ENCODE measurements at regions of chr12 and their contacts with region 1.

Region 1: DNA sequence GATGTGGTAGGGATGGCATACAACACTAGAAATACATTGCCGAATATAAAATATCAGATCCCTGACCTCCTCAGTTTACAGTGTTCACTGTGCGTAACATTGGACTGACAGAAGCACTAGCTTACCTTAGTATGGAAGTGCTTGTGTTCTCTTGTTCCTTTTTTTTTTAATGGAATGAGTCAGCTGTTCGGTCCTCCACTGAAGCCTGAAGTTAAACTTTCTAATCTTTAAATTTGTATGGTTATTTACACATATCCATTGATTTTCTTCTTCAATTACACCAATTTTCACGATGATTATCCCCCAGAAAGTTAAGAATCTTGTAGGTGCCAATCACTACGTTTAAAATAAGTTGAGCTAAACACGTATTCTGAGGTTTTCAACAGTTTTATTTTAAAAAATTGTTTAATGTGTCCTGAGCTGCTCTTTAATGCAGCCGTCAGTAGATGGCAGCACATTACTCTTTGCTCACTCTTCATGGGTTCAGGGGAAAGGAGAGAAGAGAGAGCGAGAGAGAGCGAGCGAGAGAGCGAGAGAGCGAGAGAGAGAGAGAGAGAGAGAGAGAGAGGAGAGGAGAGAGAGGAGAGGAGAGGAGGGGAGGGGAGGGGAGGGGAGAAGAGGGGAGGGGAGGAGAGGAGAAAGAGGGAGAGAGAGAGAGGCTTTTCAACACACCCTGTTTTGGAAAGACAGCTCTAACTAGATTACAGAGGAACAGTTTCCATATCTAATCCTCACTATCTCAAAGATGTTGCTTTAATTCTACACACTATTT is 134.7 kb upstream of the SCAF11 start:
- DNase-seq: no peak
- ATAC-seq: peak; percentile 93
- H3K4me3 Mint-ChIP-seq: peak overlapping the region; percentile 67
- H3K27ac Mint-ChIP-seq: peak overlapping the region; percentile 72
- H3K4me1 Mint-ChIP-seq: peaks cover 5% of the 10 kb centered on the region
- H3K27me3 Mint-ChIP-seq: peaks cover 5% of the 10 kb centered on the region
- CTCF ChIP-seq: peak; percentile 75

Region 2: DNA sequence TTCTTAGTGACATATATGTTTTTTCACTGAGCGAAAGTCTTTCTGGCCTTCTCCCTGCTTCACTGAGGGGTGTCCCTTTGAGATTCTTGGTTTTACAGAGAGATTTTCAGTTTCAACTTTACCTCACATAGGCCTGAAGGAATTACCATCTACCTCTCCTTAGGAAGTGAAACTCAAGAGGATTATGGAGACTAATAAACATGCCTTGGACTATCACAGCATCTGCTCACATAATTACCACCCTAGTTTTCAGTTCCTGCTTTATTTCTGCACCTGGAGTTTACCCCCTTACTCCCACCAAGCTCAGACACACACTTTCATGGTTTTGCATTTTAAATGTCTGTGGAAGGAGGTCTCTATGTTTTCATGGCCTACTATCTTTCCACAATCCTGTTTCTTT is 16.3 kb before region 1 on chr12:
- CTCF ChIA-PET with region 1: interaction called, 22 read pairs
- POLR2A ChIA-PET with region 1: interaction called, 5 read pairs
- intact Hi-C with region 1: no loop called
- DNase-seq: no peak
- ATAC-seq: peak; percentile 87
- H3K4me3 Mint-ChIP-seq: peak overlapping the region; percentile 60
- H3K27ac Mint-ChIP-seq: peak overlapping the region; percentile 85
- H3K4me1 Mint-ChIP-seq: peaks cover 49% of the 10 kb centered on the region
- H3K27me3 Mint-ChIP-seq: no peaks in the 10 kb centered on the region
- CTCF ChIP-seq: no peak

Region 3: DNA sequence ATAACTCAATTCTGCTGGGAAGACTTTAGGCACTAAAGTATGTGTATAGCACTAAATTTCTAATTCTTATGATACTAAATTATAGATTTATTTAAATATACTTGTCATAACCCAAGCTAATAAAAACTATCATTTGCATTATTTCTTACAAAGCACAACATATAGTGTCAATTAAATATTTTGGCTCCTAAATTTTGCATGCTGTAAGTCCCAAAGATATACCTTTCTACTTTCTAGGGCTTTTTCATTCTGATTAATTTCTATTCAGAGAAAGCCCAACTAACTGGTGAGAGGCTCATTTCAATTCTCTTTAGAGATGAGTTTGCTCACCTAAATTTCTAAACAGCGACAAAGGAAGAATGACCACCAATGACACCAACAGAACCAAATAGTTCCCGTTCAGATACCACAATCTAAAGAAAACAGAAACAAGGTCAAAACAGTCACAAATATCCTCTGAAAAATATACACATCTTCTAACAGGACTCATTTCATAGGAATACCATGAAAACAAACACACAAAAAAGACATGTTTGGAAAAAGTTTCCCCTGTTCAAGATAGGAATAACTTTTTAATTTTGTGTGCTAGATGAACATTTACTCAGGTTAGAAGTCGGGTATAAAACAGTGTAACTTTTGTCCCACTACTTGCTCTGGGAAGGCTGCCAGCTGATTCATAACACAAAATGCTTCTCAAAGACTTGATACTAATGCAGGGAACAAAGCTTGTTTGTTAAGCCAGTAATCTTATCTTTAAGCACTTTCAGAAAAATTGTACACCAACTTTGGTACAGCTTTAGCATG is 239.9 kb after region 1 on chr12:
- CTCF ChIA-PET with region 1: no interaction called
- POLR2A ChIA-PET with region 1: interaction called, 6 read pairs
- intact Hi-C with region 1: loop called (anchors 5 kb)
- DNase-seq: no peak
- ATAC-seq: no peak
- H3K4me3 Mint-ChIP-seq: no peak overlapping the region
- H3K27ac Mint-ChIP-seq: peak overlapping the region; percentile 66
- H3K4me1 Mint-ChIP-seq: peaks cover 74% of the 10 kb centered on the region
- H3K27me3 Mint-ChIP-seq: no peaks in the 10 kb centered on the region
- CTCF ChIP-seq: no peak

Region 4: GRCh38 chr12:46933947-46934346 is 808.9 kb after region 1 on chr12:
- CTCF ChIA-PET with region 1: interaction called, 13 read pairs
- POLR2A ChIA-PET with region 1: no interaction called
- intact Hi-C with region 1: loop called (anchors 1 kb)
- DNase-seq: no peak
- ATAC-seq: no peak
- H3K4me3 Mint-ChIP-seq: no peak overlapping the region
- H3K27ac Mint-ChIP-seq: no peak overlapping the region
- H3K4me1 Mint-ChIP-seq: no peaks in the 10 kb centered on the region
- H3K27me3 Mint-ChIP-seq: peaks cover 17% of the 10 kb centered on the region
- CTCF ChIP-seq: no peak

Region 5: DNA sequence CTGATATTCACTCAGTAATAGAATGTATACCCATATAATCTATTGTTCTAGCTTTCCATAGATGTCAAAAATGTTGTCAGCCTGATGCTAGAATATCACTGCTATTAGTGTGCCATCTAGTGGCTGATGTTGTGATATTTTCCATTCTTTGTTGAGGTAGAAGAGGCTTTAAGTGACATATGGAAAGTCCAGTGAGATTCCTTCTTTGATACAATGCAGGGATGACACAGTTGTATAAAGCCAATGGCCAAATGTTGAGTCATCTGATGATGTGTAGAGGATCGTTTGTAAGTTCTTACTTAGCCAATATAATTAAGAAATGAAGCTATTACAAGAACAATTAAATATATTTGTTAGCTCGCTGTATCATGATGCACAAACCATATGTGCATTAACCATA is 896.3 kb after region 1 on chr12:
- CTCF ChIA-PET with region 1: interaction called, 39 read pairs
- POLR2A ChIA-PET with region 1: no interaction called
- intact Hi-C with region 1: loop called (anchors 1 kb)
- DNase-seq: no peak
- ATAC-seq: no peak
- H3K4me3 Mint-ChIP-seq: no peak overlapping the region
- H3K27ac Mint-ChIP-seq: no peak overlapping the region
- H3K4me1 Mint-ChIP-seq: no peaks in the 10 kb centered on the region
- H3K27me3 Mint-ChIP-seq: peaks cover 3% of the 10 kb centered on the region
- CTCF ChIP-seq: peak; percentile 52